Spleen (tissue), 13 donors: ENCODE measurements at regions of chr1 and their contacts with region 1.

Region 1: DNA sequence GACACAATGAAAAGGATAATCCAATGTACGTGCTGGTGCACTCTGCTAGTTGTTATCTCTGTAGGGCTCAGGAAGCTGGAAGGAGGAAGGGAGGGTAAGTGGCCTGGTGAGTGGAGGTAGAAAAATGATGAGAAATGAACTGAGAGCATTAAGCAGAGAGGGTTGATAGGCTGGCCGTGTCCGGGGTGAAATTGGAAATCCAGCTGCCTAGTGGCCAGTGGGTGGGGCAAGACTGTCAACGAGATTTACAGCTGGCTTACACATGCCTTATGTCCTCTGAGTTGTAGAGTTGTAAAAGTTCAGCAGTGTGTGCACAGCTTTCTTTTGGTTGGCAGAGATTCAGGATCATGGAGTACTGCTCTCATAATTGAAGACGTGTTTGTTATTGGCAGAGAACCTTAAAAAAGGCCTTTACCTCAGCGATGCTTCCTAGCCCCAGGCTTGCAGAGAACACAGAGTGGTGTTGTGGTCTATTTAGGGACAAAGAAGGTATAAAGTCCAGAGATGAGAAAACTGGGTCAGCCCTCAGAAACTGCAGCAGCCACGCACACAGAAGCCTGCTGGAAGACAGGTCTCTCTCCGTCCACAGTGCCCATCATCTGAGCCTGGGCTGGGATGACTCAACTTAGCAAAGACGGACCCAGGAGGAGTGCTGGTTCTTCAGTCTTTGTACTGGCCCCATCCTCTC is 132.4 kb downstream of the EDEM3 start:
- DNase-seq: no peak
- H3K4me3 ChIP-seq: no peak overlapping the region
- H3K27ac ChIP-seq: peak overlapping the region in 5 of 8 donors; percentile 49 to 71 (median 58)
- H3K4me1 ChIP-seq: peaks cover 0 to 39% (median 13%) of the 10 kb centered on the region in 6 donors
- H3K27me3 ChIP-seq: no peaks in the 10 kb centered on the region
- CTCF ChIP-seq: peak in 1 of 11 experiments; percentile 4
- POLR2A ChIP-seq: no peak

Region 2: DNA sequence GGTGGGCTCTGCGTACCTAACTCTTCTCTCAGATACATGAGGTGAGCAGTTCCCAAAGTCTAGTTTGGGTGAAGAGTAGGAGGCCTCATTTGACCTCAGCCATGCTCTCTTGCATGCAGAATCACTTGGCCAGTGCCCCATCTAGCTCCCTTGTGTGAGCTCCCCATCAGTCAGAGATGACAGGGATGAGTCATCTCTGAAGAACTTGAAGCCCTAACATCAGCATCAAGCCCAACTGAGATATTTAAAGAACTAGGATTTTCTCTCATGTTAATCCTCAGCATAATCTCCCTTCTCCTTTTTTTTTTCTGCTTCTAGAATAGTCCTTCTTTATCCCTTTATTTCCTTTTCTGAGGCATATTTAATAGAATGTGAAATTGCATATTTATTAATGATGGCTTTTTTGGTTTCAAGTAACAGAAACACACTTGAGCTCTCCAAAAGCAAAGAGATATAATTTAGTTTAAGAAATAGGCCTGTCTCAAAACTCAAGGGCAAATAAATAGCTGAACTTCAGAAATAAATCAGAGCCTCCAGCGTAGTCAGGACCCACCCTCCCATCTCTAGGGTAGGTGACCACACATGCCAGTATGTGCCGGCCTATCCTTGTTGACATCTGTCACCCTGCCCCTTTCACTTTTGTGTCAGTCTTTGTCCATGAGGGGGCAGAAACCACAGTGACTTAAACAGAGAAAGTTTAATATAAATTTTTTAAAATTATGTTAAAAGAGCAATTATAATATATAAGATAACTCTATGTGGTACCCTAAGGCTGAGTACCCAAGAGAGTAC is 458.4 kb before region 1 on chr1:
- intact Hi-C with region 1: loop called (anchors 5 kb)
- DNase-seq: no peak
- H3K4me3 ChIP-seq: no peak overlapping the region
- H3K27ac ChIP-seq: peak overlapping the region in 2 of 8 donors; percentile 1 to 25
- H3K4me1 ChIP-seq: peaks cover 0 to 67% (median 20%) of the 10 kb centered on the region in 6 donors
- H3K27me3 ChIP-seq: no peaks in the 10 kb centered on the region
- CTCF ChIP-seq: no peak
- POLR2A ChIP-seq: no peak